ENCODE measurements at regions of chr4 and their contacts with region 1.

Region 1: GRCh38 chr4:98995183-98996055 is at the start of gene METAP1:
- DNase-seq: peak; percentile 94
- H3K4me3 Mint-ChIP-seq: peak within 1 kb of the TSS; percentile 91
- H3K27ac Mint-ChIP-seq: peak within 1 kb of the TSS; percentile 99
- H3K4me1 Mint-ChIP-seq: peaks cover 33% of the 10 kb centered on the region
- H3K27me3 Mint-ChIP-seq: no peaks in the 10 kb centered on the region
- total RNA-seq, gene METAP1: 58.1 and 61.3 TPM in 2 replicates

Region 2: DNA sequence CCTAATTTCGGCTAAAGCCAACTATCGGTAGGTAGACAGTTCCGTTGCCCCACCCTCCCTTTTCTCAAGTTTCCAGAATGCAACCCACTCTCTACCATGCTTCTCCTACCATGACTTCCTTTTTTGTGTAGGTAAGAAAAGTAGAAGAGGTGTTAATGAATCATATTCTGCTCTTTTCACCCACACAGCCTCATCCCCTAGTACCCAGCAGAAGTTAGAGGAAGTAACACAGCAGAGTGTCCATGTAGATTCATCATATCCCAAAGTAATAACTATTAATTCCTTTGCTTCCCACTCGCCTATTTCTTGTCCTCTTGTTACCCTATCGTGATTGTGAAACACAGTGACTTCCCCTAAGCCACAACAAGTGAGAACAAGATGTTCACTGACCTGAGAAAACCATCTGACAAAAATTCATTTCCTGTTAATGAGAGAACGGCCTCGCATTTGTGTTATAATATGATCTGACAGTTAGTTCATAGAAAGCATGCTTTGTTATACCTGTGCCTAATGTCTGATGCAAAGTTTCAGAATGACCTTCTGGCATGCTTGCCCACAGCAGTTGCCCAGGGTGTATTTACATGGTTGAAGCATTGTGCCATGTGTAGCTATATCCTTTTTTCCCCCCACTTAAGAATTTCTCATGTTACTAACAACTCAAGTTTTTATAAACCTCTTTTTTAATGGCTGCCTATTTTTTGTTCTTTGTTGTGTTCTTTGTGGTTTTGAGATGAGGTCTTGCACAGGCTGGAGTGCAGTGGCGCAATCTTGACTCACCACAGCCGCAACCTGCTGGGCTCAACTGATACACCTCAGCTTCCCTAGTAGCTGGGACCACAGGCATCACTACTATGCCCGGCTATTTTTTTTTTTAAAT is 548.7 kb before region 1 on chr4:
- intact Hi-C with region 1: loop called (anchors 2 kb)
- DNase-seq: peak; percentile 44
- H3K4me3 Mint-ChIP-seq: peak overlapping the region; percentile 67
- H3K27ac Mint-ChIP-seq: peak overlapping the region; percentile 90
- H3K4me1 Mint-ChIP-seq: peaks cover 43% of the 10 kb centered on the region
- H3K27me3 Mint-ChIP-seq: peaks cover 3% of the 10 kb centered on the region

Region 3: DNA sequence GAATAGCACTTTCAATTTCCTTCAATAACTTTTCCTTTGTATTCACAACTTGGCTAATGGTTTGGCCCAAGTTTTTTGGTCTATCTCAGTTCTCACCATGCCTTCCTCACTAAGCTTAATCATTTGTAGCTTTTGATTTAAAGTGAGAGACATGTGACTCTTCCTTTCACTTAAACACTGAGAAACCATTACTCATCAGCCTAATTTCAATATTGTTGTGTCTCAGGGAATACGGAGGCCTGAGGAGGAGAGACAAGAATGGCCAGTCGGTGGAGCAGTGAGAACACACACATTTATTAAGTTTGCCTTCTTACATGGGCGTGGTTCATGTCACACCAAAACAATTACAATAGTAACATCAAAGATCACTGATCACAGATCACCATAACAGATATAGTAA is 393.7 kb before region 1 on chr4:
- intact Hi-C with region 1: loop called (anchors 1 kb)
- DNase-seq: no peak
- H3K4me3 Mint-ChIP-seq: peak overlapping the region; percentile 73
- H3K27ac Mint-ChIP-seq: peak overlapping the region; percentile 90
- H3K4me1 Mint-ChIP-seq: peaks cover 60% of the 10 kb centered on the region
- H3K27me3 Mint-ChIP-seq: no peaks in the 10 kb centered on the region

Region 4: DNA sequence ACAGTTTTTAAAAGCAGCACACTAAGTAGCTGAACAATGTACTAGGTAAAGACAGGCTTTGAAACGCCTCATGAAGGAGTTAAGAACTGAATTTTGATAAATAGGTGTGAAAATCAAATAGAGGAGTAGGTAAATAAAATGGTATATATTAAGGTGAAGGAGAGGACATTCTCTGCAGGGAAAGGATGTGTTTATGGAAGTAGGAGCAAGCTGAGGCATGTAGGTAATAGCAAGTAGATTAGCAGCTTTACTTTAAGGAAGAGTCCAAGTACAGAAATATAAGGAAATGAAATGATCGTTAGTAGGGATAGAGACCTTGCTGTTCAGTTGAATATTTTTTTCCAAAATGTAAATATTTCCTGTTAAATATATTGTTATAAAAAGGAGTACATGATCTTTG is 12.6 kb after region 1 on chr4:
- intact Hi-C with region 1: no loop called
- DNase-seq: no peak
- H3K4me3 Mint-ChIP-seq: no peak overlapping the region
- H3K27ac Mint-ChIP-seq: no peak overlapping the region
- H3K4me1 Mint-ChIP-seq: no peaks in the 10 kb centered on the region
- H3K27me3 Mint-ChIP-seq: no peaks in the 10 kb centered on the region

Region 5: GRCh38 chr4:99043346-99043745 is 47.9 kb after region 1 on chr4:
- intact Hi-C with region 1: loop called (anchors 2 kb)
- DNase-seq: no peak
- H3K4me3 Mint-ChIP-seq: peak overlapping the region; percentile 43
- H3K27ac Mint-ChIP-seq: peak overlapping the region; percentile 80
- H3K4me1 Mint-ChIP-seq: peaks cover 19% of the 10 kb centered on the region
- H3K27me3 Mint-ChIP-seq: no peaks in the 10 kb centered on the region

Region 6: GRCh38 chr4:99462875-99463464 is 467.6 kb after region 1 on chr4:
- intact Hi-C with region 1: loop called (anchors 2 kb)
- DNase-seq: peak; percentile 37
- H3K4me3 Mint-ChIP-seq: no peak overlapping the region
- H3K27ac Mint-ChIP-seq: no peak overlapping the region
- H3K4me1 Mint-ChIP-seq: no peaks in the 10 kb centered on the region
- H3K27me3 Mint-ChIP-seq: peaks cover 11% of the 10 kb centered on the region

Region 7: DNA sequence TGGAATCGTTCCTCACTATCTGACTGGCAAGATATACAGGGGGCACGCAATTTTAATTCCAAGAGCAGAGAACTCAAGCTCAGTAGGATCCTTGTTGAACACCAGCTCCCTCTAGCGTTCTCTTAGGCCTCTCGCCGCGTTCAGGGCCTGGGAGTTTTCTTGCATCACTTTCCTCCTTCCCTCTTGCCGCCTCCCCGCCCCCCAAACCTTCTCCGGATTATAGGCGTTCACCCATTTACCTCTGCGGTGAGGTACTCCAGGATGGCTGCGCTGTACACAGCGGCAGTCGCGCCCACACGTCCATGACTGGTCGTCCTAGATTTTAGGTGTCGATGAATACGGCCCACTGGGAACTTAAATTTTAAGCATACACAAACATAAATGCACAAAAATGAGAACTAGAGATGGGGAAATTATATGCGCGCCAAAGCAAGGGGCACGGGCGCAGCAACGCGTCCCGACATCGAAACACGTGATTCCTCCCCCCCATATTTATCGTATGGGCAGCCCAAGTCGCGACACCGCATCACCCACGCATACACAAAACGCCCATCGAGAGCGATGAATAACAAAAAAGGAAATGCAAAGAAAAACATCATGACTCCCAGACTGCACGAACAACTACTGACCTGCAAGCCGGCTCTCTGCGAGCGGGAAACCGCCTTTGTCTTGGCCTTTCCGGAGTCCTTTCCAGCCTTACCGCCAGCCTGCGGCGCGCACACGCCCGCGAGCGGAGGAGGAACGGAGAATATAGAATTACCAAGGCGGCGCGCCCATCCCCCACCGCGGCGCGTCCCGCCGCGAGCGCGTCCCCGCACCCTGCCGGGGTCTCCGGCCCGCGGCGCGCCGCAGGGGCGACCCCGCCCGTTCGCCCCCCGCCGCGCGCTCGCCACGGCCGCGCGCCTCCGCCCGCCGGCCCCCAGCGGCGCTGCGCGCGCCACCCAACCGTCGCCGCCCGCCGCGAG is 953.9 kb after region 1 on chr4:
- intact Hi-C with region 1: loop called (anchors 2 kb)
- DNase-seq: peak; percentile 82
- H3K4me3 Mint-ChIP-seq: no peak overlapping the region
- H3K27ac Mint-ChIP-seq: no peak overlapping the region
- H3K4me1 Mint-ChIP-seq: peaks cover 30% of the 10 kb centered on the region
- H3K27me3 Mint-ChIP-seq: no peaks in the 10 kb centered on the region